Transverse colon (tissue), 4 donors: ENCODE measurements at regions of chr6 and their contacts with region 1.

Region 1: GRCh38 chr6:46848684-46849360 is 55.6 kb downstream of the MEP1A start:
- DNase-seq: peak; percentile 93
- H3K4me3 ChIP-seq: no peak overlapping the region
- H3K27ac ChIP-seq: peak overlapping the region; percentile 6 to 43 (median 34)
- H3K4me1 ChIP-seq: peaks cover 0 to 14% (median 6%) of the 10 kb centered on the region in 4 donors
- H3K27me3 ChIP-seq: no peaks in the 10 kb centered on the region
- CTCF ChIP-seq: peak; percentile 93 to 97 (median 96)
- EP300 ChIP-seq: peak; percentile 13
- POLR2A ChIP-seq: no peak

Region 2: DNA sequence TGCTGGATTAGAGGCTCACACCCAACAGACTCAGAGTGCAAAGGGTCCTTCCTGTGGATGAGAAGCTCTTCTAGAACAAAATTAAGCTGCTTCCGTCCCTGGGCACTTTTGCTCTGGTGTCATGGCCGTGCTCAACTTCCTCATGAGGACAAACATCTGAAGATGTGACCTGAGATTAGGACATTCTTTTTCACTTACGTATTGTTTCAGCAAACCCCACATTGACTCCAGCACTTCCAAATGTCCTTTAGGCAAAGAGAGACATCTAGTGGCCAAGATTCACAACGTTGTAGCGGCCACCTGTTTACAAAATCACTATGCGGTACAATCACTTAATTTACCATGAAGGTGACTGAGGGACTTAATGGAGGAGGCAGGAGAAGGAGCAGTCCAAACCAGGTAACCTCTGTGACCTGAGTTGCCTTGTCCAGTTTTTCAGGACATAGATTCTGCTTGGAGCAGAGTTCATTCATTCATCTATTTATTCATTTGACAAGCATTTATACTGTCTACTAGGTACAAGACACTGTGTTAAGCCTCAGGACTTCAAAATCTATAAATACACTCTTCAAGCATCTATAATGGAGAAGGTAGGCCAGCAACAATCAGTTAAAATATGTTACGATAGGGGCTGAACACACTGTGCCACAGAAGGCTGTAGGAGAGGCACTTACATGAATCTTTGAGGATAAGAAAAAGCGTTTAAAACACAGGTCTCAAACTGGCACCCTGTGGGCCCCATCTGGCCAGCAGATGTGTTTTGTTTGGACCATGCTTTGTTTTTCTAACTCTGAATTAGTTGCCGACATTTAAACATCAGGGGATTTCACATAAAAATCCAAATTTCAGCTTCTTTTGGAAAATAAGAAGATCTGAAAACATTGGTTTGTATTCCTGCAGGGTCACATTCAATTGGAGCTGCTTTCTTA is 198.9 kb after region 1 on chr6:
- in situ Hi-C with region 1: loop called in 1 of 4 experiments (anchors 10 kb)
- intact Hi-C with region 1: no loop called
- DNase-seq: peak; percentile 52
- H3K4me3 ChIP-seq: no peak overlapping the region
- H3K27ac ChIP-seq: peak overlapping the region in 1 of 4 donors; percentile 35
- H3K4me1 ChIP-seq: peaks cover 0 to 15% (median 5%) of the 10 kb centered on the region in 4 donors
- H3K27me3 ChIP-seq: no peaks in the 10 kb centered on the region
- CTCF ChIP-seq: peak; percentile 62 to 80 (median 69)
- EP300 ChIP-seq: no peak
- POLR2A ChIP-seq: no peak

Region 3: GRCh38 chr6:47752801-47753200 is 904.0 kb after region 1 on chr6:
- in situ Hi-C with region 1: no loop called
- intact Hi-C with region 1: no loop called
- DNase-seq: no peak
- H3K4me3 ChIP-seq: no peak overlapping the region
- H3K27ac ChIP-seq: no peak overlapping the region
- H3K4me1 ChIP-seq: no peaks in the 10 kb centered on the region
- H3K27me3 ChIP-seq: no peaks in the 10 kb centered on the region
- CTCF ChIP-seq: no peak
- EP300 ChIP-seq: no peak
- POLR2A ChIP-seq: no peak